Naive thymus-derived CD8-positive, alpha-beta T cell (primary cell): ENCODE measurements at regions of chr6 and their contacts with region 1.

Region 1: GRCh38 chr6:26122793-26123674 is 35.8 kb downstream of the HFE start:
- DNase-seq: peak; percentile 76 to 99 (median 94)
- ATAC-seq: peak; percentile 59 to 63
- H3K4me3 Mint-ChIP-seq: peak overlapping the region; percentile 93 to 100 (median 98)
- H3K27ac Mint-ChIP-seq: peak overlapping the region; percentile 96 to 100 (median 98)
- H3K4me1 Mint-ChIP-seq: peaks cover 24 to 43% (median 33%) of the 10 kb centered on the region in 4 donors
- H3K27me3 Mint-ChIP-seq: peaks cover 0 to 4% (median 0%) of the 10 kb centered on the region in 5 donors

Region 2: DNA sequence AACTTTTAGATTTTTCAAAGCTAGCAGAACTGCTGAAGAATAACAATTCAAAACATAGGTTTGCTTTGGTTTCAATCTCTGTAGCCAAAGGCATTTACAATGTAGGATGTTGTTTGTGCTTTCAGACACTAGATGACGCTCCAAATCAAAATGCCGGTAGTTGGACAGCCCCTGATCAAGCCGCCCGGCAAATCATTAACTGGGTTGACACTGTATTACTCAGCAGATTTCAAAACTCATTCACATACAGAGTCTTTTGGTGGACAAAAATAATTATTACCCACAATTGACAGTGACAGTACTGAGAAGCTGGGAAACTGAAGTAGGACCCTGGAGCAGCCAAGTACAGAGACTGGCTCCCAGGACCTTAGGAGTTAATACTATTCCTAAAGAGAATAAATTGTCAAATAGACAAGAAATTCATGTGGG is 57.1 kb before region 1 on chr6:
- POLR2A ChIA-PET with region 1: interaction called, 32 read pairs
- DNase-seq: peak in 8 of 10 donors; percentile 43 to 74 (median 66)
- ATAC-seq: peak; percentile 93 to 97
- H3K4me3 Mint-ChIP-seq: no peak overlapping the region
- H3K27ac Mint-ChIP-seq: no peak overlapping the region
- H3K4me1 Mint-ChIP-seq: peaks cover 2 to 10% (median 6%) of the 10 kb centered on the region in 4 donors
- H3K27me3 Mint-ChIP-seq: no peaks in the 10 kb centered on the region

Region 3: GRCh38 chr6:26175428-26176181 is 52.6 kb after region 1 on chr6:
- POLR2A ChIA-PET with region 1: interaction called, 182 read pairs
- DNase-seq: peak in 9 of 10 donors; percentile 21 to 76 (median 59)
- ATAC-seq: no peak
- H3K4me3 Mint-ChIP-seq: peak overlapping the region in 5 of 10 donors; percentile 33 to 62 (median 51)
- H3K27ac Mint-ChIP-seq: peak overlapping the region; percentile 11 to 82 (median 59)
- H3K4me1 Mint-ChIP-seq: peaks cover 15 to 43% (median 34%) of the 10 kb centered on the region in 4 donors
- H3K27me3 Mint-ChIP-seq: no peaks in the 10 kb centered on the region

Region 4: DNA sequence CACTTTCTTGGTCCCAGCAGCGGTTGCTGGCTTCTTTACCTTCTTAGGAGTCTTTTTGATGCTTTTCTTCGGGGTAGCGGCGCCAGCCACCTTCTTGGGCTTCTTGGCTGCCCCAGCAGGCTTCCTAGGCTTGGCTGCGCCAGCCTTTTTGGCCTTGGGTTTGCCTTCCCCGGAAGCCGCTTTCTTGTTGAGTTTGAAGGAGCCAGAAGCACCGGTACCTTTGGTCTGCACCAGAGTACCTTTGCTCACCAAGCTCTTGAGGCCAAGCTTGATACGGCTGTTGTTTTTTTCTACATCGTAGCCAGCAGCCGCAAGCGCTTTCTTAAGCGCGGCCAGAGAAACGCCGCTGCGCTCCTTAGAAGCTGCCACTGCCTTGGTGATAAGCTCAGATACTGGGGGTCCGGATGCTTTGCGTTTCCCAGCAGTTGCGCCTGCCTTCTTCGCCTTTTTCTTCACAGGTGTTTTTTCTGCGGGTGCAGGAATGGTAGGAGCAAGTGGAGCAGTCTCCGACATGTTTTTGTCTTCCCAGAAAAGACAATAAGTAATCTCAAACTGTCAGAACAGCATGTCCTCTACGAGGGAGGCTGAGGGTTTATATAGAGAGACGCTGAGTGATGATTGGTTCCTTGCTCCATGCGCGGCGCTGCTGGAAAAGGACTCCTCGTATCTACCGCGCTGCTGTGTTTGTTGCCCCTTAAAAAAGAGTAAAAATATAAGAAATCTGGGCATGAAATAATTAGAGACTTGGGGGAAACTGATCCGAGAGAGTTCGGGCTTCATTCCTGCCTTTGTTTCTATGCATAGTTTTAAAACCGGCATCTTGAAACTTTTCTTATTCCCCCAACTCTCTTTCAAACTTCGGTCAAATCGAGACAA is 111.6 kb after region 1 on chr6:
- POLR2A ChIA-PET with region 1: interaction called, 78 read pairs
- DNase-seq: peak; percentile 41 to 91 (median 86)
- ATAC-seq: peak; percentile 69
- H3K4me3 Mint-ChIP-seq: peak overlapping the region; percentile 91 to 99 (median 95)
- H3K27ac Mint-ChIP-seq: peak overlapping the region; percentile 95 to 100 (median 97)
- H3K4me1 Mint-ChIP-seq: peaks cover 12 to 37% (median 32%) of the 10 kb centered on the region in 4 donors
- H3K27me3 Mint-ChIP-seq: no peaks in the 10 kb centered on the region

Region 5: GRCh38 chr6:27132532-27133280 is 1009.7 kb after region 1 on chr6:
- POLR2A ChIA-PET with region 1: interaction called, 25 read pairs
- DNase-seq: peak; percentile 69 to 98 (median 94)
- ATAC-seq: peak; percentile 84
- H3K4me3 Mint-ChIP-seq: no peak overlapping the region
- H3K27ac Mint-ChIP-seq: no peak overlapping the region
- H3K4me1 Mint-ChIP-seq: peaks cover 5 to 20% (median 10%) of the 10 kb centered on the region in 4 donors
- H3K27me3 Mint-ChIP-seq: no peaks in the 10 kb centered on the region

Region 6: GRCh38 chr6:27893059-27893835 is 1770.2 kb after region 1 on chr6:
- POLR2A ChIA-PET with region 1: interaction called, 34 read pairs
- DNase-seq: peak; percentile 69 to 96 (median 90)
- ATAC-seq: peak; percentile 72 to 78
- H3K4me3 Mint-ChIP-seq: no peak overlapping the region
- H3K27ac Mint-ChIP-seq: no peak overlapping the region
- H3K4me1 Mint-ChIP-seq: peaks cover 7 to 38% (median 28%) of the 10 kb centered on the region in 4 donors
- H3K27me3 Mint-ChIP-seq: no peaks in the 10 kb centered on the region